ENCODE measurements at regions of chr10 and their contacts with region 1.

Region 1: GRCh38 chr10:79202188-79203013 is 133.6 kb downstream of the ZMIZ1 start:
- DNase-seq: peak; percentile 73
- ATAC-seq: peak; percentile 71
- H3K4me3 Mint-ChIP-seq: no peak overlapping the region
- H3K27ac Mint-ChIP-seq: no peak overlapping the region
- H3K4me1 Mint-ChIP-seq: no peaks in the 10 kb centered on the region
- H3K27me3 Mint-ChIP-seq: no peaks in the 10 kb centered on the region
- CTCF ChIP-seq: peak; percentile 58

Region 2: GRCh38 chr10:78960316-78960800 is 242.0 kb before region 1 on chr10:
- CTCF ChIA-PET with region 1: interaction called, 11 read pairs
- POLR2A ChIA-PET with region 1: no interaction called
- DNase-seq: no peak
- ATAC-seq: no peak
- H3K4me3 Mint-ChIP-seq: no peak overlapping the region
- H3K27ac Mint-ChIP-seq: no peak overlapping the region
- H3K4me1 Mint-ChIP-seq: peaks cover 36% of the 10 kb centered on the region
- H3K27me3 Mint-ChIP-seq: no peaks in the 10 kb centered on the region
- CTCF ChIP-seq: no peak

Region 3: DNA sequence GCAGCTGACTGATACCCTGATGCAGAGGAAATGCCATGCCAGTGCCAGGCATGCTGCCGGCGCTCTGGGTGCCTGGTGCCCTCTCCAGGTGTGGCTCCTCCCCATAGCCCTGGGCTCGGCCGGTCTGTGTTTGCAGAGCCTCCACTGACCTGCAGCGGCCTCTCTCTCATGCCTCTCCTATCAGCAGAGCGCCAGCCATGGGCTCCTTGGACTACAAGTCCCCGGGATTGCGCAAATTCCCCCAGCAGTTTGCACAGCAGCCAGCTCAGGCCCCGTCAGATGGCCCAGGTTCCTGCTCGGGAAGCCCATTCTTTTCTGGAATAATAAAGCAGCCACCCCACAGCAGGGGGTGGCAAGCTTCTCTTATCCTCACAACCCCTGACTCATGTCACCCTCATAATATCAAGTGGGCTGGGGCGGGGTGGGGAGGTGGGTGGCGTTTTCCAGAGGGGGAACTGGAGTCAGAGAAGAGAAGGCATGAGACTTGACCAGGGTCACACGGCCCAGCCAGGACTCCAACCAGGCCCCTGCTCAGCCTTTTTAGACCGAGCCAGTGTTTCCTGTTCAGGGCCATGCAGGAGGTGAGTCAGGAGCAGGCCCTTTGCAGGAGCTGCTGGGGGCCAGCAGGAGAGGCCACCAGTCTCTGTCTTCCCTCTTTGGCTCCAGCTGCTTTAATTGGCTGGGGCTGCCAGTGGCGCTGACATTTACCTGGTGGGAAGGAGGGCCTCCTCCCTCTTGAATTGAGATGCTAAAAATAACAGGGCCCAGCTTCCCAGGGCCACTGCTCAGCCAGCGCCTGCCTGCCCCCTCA is 75.0 kb before region 1 on chr10:
- CTCF ChIA-PET with region 1: interaction called, 11 read pairs
- POLR2A ChIA-PET with region 1: no interaction called
- DNase-seq: no peak
- ATAC-seq: peak; percentile 33
- H3K4me3 Mint-ChIP-seq: no peak overlapping the region
- H3K27ac Mint-ChIP-seq: peak overlapping the region; percentile 93
- H3K4me1 Mint-ChIP-seq: peaks cover 65% of the 10 kb centered on the region
- H3K27me3 Mint-ChIP-seq: no peaks in the 10 kb centered on the region
- CTCF ChIP-seq: no peak

Region 4: GRCh38 chr10:79241990-79242619 is 39.7 kb after region 1 on chr10:
- CTCF ChIA-PET with region 1: interaction called, 11 read pairs
- POLR2A ChIA-PET with region 1: no interaction called
- DNase-seq: peak; percentile 54
- ATAC-seq: peak; percentile 10
- H3K4me3 Mint-ChIP-seq: peak overlapping the region; percentile 65
- H3K27ac Mint-ChIP-seq: no peak overlapping the region
- H3K4me1 Mint-ChIP-seq: peaks cover 53% of the 10 kb centered on the region
- H3K27me3 Mint-ChIP-seq: peaks cover 72% of the 10 kb centered on the region
- CTCF ChIP-seq: no peak